ENCODE measurements at regions of chr12 and their contacts with region 1.

Region 1: DNA sequence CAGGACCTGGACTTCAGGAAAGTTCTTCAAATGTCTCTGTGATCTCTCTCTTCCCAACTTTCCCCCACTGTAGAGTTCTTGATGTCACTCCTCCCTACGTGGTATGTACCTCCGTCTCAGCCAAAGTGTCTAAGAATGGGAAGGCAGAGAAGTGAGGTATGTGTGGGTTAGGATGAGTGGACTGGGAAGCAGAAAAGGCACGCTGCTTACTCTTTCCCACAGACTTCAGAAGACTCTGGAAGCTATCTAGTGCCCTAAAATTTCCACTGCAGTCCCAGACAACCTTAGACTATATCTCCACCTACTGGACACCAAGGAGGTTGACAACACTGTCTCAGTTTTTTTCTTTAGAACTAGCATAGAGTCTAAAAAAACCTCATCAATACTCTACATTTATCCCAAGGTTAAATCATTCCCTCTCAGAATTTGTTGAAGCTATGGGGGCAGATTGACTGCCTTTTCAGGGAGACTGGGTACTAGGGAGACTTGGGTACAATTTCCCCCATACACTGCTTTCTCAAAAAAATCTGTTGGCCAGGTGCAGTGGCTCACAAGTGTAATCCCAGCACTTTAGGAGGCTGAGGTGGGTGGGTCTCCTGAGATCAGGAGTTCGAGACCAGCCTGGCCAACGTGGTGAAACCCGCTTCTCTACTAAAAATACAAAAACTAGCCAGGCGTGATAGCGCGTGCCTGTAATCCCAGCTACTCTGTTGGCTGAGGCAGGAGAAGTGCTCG is 20.6 kb upstream of the ITGA5 start:
- DNase-seq: no peak
- H3K4me3 Mint-ChIP-seq: no peak overlapping the region
- H3K27ac Mint-ChIP-seq: no peak overlapping the region
- H3K4me1 Mint-ChIP-seq: peaks cover 5% of the 10 kb centered on the region
- H3K27me3 Mint-ChIP-seq: peaks cover 24% of the 10 kb centered on the region

Region 2: GRCh38 chr12:54390668-54391551 is 48.8 kb before region 1 on chr12:
- CTCF ChIA-PET with region 1: interaction called, 481 read pairs
- POLR2A ChIA-PET with region 1: no interaction called
- DNase-seq: peak; percentile 59
- H3K4me3 Mint-ChIP-seq: no peak overlapping the region
- H3K27ac Mint-ChIP-seq: no peak overlapping the region
- H3K4me1 Mint-ChIP-seq: peaks cover 33% of the 10 kb centered on the region
- H3K27me3 Mint-ChIP-seq: no peaks in the 10 kb centered on the region

Region 3: GRCh38 chr12:54452628-54453027 is 12.9 kb after region 1 on chr12:
- CTCF ChIA-PET with region 1: interaction called, 31 read pairs
- POLR2A ChIA-PET with region 1: no interaction called
- DNase-seq: no peak
- H3K4me3 Mint-ChIP-seq: no peak overlapping the region
- H3K27ac Mint-ChIP-seq: no peak overlapping the region
- H3K4me1 Mint-ChIP-seq: no peaks in the 10 kb centered on the region
- H3K27me3 Mint-ChIP-seq: peaks cover 11% of the 10 kb centered on the region